ENCODE measurements at regions of chr5 and their contacts with region 1.

Region 1: GRCh38 chr5:181260387-181261319 is at the start of gene TRIM52:
- DNase-seq: peak; percentile 97
- H3K4me3 ChIP-seq: peak within 1 kb of the TSS; percentile 81
- H3K27ac ChIP-seq: peak within 1 kb of the TSS; percentile 77
- H3K4me1 ChIP-seq: peaks cover 28% of the 10 kb centered on the region
- CTCF ChIP-seq: no peak
- total RNA-seq, gene TRIM52: 16.1 and 25.1 TPM in 2 replicates

Region 2: GRCh38 chr5:180852495-180852894 is 408.2 kb before region 1 on chr5:
- CTCF ChIA-PET with region 1: no interaction called
- POLR2A ChIA-PET with region 1: no interaction called
- intact Hi-C with region 1: no loop called
- DNase-seq: no peak
- H3K4me3 ChIP-seq: no peak overlapping the region
- H3K27ac ChIP-seq: no peak overlapping the region
- H3K4me1 ChIP-seq: peaks cover 3% of the 10 kb centered on the region
- CTCF ChIP-seq: no peak

Region 3: GRCh38 chr5:181207214-181208107 is 53.2 kb before region 1 on chr5:
- CTCF ChIA-PET with region 1: interaction called, 4 read pairs
- POLR2A ChIA-PET with region 1: interaction called, 4 read pairs
- intact Hi-C with region 1: loop called (anchors 1 kb)
- DNase-seq: peak; percentile 87
- H3K4me3 ChIP-seq: peak overlapping the region; percentile 79
- H3K27ac ChIP-seq: peak overlapping the region; percentile 59
- H3K4me1 ChIP-seq: peaks cover 29% of the 10 kb centered on the region
- CTCF ChIP-seq: no peak

Region 4: GRCh38 chr5:181243512-181244343 is 16.9 kb before region 1 on chr5 and contains the start of gene RACK1:
- CTCF ChIA-PET with region 1: no interaction called
- POLR2A ChIA-PET with region 1: interaction called, 17 read pairs
- intact Hi-C with region 1: loop called (anchors 1 kb)
- DNase-seq: peak; percentile 94
- H3K4me3 ChIP-seq: peak within 1 kb of the TSS; percentile 89
- H3K27ac ChIP-seq: peak within 1 kb of the TSS; percentile 89
- H3K4me1 ChIP-seq: peaks cover 53% of the 10 kb centered on the region
- CTCF ChIP-seq: no peak
- total RNA-seq, gene RACK1: 4,583 and 5,614 TPM in 2 replicates

Measured in OCI-LY7 (cell line).